Naive thymus-derived CD4-positive, alpha-beta T cell (primary cell): ENCODE measurements at regions of chr17 and their contacts with region 1.

Region 1: GRCh38 chr17:16537130-16537458 is 31.9 kb downstream of the ZNF287 start:
- DNase-seq: no peak
- ATAC-seq: no peak
- H3K4me3 ChIP-seq: no peak overlapping the region
- H3K4me3 Mint-ChIP-seq: peak overlapping the region; percentile 90 to 98 (median 96)
- H3K27ac ChIP-seq: peak overlapping the region; percentile 53
- H3K27ac Mint-ChIP-seq: peak overlapping the region; percentile 85 to 96 (median 93)
- H3K4me1 ChIP-seq: peaks cover 4 to 5% of the 10 kb centered on the region in 2 donors
- H3K4me1 Mint-ChIP-seq: peaks cover 6 to 23% (median 15%) of the 10 kb centered on the region in 7 donors
- H3K27me3 ChIP-seq: no peaks in the 10 kb centered on the region
- H3K27me3 Mint-ChIP-seq: peaks cover 0 to 4% (median 0%) of the 10 kb centered on the region in 5 donors

Region 2: GRCh38 chr17:16215273-16215964 is 321.7 kb before region 1 on chr17 and contains the start of gene NCOR1:
- CTCF ChIA-PET with region 1: no interaction called
- POLR2A ChIA-PET with region 1: no interaction called
- intact Hi-C with region 1: loop called (anchors 1 to 2 kb)
- DNase-seq: peak; percentile 76 to 89 (median 82)
- ATAC-seq: peak; percentile 93
- H3K4me3 ChIP-seq: peak within 1 kb of the TSS; percentile 76
- H3K4me3 Mint-ChIP-seq: peak within 1 kb of the TSS; percentile 89 to 99 (median 96)
- H3K27ac ChIP-seq: peak within 1 kb of the TSS; percentile 91
- H3K27ac Mint-ChIP-seq: peak within 1 kb of the TSS; percentile 58 to 98 (median 93)
- H3K4me1 ChIP-seq: peaks cover 22 to 29% of the 10 kb centered on the region in 2 donors
- H3K4me1 Mint-ChIP-seq: peaks cover 25 to 69% (median 50%) of the 10 kb centered on the region in 7 donors
- H3K27me3 ChIP-seq: no peaks in the 10 kb centered on the region
- H3K27me3 Mint-ChIP-seq: no peaks in the 10 kb centered on the region
- total RNA-seq, gene NCOR1: 131 to 169 (median 149) TPM

Region 3: DNA sequence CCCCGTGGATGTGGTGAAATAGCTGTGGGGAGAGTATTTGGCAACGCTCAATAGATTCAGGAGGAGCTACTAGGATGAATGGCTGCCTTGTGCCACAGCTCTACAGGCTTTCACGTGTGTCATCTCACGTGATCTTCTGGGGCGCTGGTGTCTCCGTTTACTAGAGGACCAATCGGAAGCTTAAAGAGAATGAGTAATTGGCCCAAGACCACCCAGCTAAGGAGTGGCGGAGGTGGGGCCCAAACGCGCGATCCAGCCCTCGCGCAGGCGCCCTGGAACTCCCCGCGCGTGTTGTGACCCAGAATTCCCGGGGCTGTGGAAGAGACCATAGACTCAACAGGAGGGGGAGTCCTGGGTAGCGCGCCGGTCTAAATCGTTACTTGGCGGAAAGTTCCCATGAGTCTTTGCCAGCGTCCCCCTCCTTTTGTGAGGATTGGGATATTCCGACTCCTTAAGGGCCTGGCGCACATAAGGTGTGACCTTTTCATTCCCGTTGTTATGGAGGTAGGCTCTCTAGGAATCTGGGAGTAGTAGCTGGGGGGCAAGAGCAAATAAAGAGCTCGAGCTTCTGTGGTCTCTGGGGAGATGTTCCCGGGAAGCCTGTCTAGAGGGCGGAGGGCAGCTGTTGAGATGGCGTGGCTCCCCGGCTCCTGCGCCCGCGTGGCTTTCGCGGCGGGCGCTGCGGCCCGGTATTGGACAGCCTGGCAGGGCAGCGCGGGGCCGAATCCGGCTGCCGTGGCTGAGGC is 98.4 kb before region 1 on chr17:
- CTCF ChIA-PET with region 1: interaction called, 3 read pairs
- POLR2A ChIA-PET with region 1: interaction called, 13 read pairs
- intact Hi-C with region 1: loop called (anchors 1 kb)
- DNase-seq: peak; percentile 81 to 97 (median 95)
- ATAC-seq: peak; percentile 93
- H3K4me3 ChIP-seq: peak overlapping the region; percentile 89
- H3K4me3 Mint-ChIP-seq: peak overlapping the region; percentile 91 to 100 (median 100)
- H3K27ac ChIP-seq: peak overlapping the region; percentile 92
- H3K27ac Mint-ChIP-seq: peak overlapping the region; percentile 91 to 100 (median 99)
- H3K4me1 ChIP-seq: peaks cover 27 to 41% of the 10 kb centered on the region in 2 donors
- H3K4me1 Mint-ChIP-seq: peaks cover 30 to 55% (median 47%) of the 10 kb centered on the region in 7 donors
- H3K27me3 ChIP-seq: no peaks in the 10 kb centered on the region
- H3K27me3 Mint-ChIP-seq: no peaks in the 10 kb centered on the region

Region 4: GRCh38 chr17:16568541-16569357 is 31.7 kb after region 1 on chr17 and contains the start of gene ZNF287:
- CTCF ChIA-PET with region 1: no interaction called
- POLR2A ChIA-PET with region 1: interaction called, 9 read pairs
- intact Hi-C with region 1: loop called (anchors 1 kb)
- DNase-seq: peak; percentile 81 to 96 (median 92)
- ATAC-seq: peak; percentile 98
- H3K4me3 ChIP-seq: peak within 1 kb of the TSS; percentile 73
- H3K4me3 Mint-ChIP-seq: peak within 1 kb of the TSS; percentile 81 to 87 (median 86)
- H3K27ac ChIP-seq: peak within 1 kb of the TSS; percentile 82
- H3K27ac Mint-ChIP-seq: peak within 1 kb of the TSS; percentile 59 to 97 (median 91)
- H3K4me1 ChIP-seq: peaks cover 6 to 14% of the 10 kb centered on the region in 2 donors
- H3K4me1 Mint-ChIP-seq: peaks cover 8 to 29% (median 19%) of the 10 kb centered on the region in 7 donors
- H3K27me3 ChIP-seq: no peaks in the 10 kb centered on the region
- H3K27me3 Mint-ChIP-seq: peaks cover 0 to 10% (median 0%) of the 10 kb centered on the region in 5 donors
- total RNA-seq, gene ZNF287: 9.6 to 18.1 (median 13.4) TPM

Region 5: GRCh38 chr17:16991349-16992009 is 454.4 kb after region 1 on chr17:
- CTCF ChIA-PET with region 1: interaction called, 5 read pairs
- POLR2A ChIA-PET with region 1: no interaction called
- intact Hi-C with region 1: loop called in 1 of 2 experiments (anchors 2 kb)
- DNase-seq: peak; percentile 53 to 80 (median 72)
- ATAC-seq: peak; percentile 67
- H3K4me3 ChIP-seq: no peak overlapping the region
- H3K4me3 Mint-ChIP-seq: peak overlapping the region in 4 of 10 donors; percentile 25 to 69 (median 33)
- H3K27ac ChIP-seq: no peak overlapping the region
- H3K27ac Mint-ChIP-seq: peak overlapping the region in 4 of 9 donors; percentile 17 to 69 (median 46)
- H3K4me1 ChIP-seq: peaks cover 34 to 36% of the 10 kb centered on the region in 2 donors
- H3K4me1 Mint-ChIP-seq: peaks cover 24 to 41% (median 31%) of the 10 kb centered on the region in 7 donors
- H3K27me3 ChIP-seq: no peaks in the 10 kb centered on the region
- H3K27me3 Mint-ChIP-seq: peaks cover 0 to 10% (median 0%) of the 10 kb centered on the region in 5 donors